Posterior vena cava (tissue), 2 donors: ENCODE measurements at regions of chr3 and their contacts with region 1.

Region 1: DNA sequence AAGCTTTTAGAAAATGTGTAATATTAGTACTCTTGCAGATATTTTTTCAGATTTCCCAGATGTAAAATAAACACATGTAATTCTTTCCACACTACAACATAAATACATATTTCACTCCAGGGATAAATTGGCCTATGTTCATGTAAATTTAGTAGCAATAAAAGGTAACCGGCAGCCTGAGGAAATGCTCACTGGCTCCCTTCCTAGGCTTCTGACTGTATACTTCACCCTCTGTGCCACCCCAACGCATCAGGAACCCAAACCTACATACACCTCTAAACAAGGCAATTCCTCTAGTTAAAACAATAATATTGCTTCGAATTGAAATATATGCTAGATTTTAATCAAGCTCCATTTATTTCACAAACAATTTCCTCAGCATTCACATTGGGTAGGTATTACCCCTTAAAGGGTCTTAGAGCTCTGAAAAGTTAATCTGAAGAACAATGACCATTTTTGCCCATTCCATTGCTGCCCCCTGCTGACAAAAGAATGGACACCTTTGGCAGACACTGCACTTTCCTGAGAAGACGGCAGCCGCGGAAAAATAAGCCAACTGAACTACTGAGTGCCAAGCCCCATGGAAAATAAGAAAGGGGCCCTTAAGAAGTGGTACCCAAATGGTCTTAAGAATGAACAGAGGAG is 212.5 kb downstream of the OSBPL10 start:
- DNase-seq: no peak

Region 2: DNA sequence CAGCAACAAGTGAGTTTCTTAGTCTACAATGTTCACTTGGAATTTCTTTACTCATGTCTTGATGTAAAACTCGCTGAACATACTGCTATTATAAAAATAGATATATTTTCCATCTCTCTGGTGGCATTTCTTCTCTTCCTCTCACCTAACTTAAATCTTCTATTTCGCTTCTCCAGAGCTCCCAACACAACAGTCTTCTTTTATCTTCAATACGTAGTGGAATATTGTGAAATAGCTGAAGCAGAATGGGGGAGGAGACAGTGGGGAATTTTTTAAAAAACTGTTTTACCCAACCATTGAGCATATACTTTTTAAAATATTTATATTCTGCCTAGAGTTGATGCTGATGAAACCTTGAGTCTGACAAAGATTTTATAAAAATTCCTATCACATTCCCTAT is 1939.3 kb before region 1 on chr3:
- intact Hi-C with region 1: no loop called
- DNase-seq: no peak

Region 3: DNA sequence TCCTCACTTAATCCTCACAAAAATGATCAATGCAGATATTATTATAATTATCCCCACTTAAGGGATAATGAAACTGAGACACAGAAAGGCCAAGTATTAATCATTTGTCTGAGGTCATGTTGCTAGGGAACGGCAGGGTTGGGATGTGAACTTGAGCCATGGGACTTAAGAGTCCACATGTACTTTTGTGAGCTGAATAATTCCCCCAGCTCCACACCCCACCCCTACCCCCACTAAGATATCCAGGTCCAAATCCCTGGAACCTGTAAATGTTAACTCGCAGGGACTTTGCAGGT is 583.6 kb before region 1 on chr3:
- intact Hi-C with region 1: loop called in 1 of 2 experiments (anchors 10 kb)
- DNase-seq: no peak

Region 4: DNA sequence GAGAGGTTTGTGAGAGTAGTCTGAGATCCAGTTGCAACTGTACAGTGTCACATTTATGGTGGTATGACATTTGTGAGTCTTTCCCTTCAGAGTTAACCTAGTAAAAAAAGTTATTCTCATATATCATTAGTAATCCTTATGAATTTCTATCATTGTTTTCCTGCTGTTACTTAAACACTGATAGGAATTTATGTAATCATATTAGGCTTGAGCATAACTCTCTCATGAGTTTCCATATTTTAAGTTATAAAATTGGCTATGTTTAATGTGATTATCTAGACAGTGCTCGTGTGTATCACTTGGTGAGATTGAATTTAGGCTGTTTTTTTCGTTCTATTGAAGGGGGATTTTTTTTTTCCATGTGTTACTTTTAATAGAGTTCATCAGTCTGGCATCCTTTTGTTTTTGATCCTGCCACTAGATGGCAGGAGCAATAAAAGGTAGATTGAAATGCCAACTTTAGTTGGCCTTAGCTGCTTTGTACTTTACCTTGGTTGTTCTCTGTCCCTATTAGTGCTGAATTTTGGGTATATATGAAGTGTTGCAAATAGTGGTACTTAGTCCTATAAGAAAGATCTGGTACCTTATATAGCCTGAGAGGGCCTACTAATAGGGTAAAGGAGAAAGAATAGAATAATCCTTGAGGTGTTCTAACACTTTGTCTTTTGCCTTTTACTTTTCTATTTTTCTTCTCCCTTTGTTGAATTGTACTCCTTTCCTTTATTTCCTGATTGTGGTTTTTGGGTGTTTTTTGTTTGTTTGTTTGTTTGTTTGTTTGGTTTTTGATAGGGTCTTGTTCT is 217.9 kb before region 1 on chr3:
- intact Hi-C with region 1: no loop called
- DNase-seq: no peak

Region 5: DNA sequence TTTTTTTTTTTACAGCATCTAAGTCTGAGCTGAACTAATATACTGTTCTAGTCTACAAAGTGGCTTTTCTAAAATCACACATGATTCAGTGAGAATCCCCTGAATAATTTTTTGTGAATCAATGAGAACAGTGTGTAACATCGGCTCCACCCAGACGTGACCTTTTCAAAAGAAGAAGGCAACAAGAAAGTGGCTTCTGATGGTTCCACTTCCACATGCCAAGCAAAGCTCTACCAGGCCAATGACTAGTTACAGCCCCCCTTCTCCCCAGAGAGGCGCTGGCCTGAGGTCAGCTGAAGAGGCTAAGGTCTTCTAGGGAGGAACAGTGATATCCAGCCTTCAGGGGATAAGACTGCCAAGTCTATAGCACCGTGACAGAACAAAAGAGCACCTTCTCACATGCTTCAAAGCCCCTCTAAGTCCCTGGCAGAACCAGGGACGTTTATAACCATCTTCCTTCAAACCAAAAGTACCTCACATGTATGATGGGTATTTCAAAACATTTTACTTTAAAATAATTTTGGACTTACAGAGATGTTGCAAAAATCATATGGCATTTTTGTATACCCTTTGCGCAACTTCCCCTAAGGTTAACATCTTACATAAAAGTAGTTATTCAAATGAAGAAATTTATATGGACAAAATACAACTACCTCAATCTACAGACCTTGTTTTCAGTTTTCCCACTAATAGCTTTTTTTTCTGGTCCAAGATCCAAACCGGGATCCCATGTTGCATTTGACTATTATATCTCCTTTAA is 34.6 kb after region 1 on chr3:
- intact Hi-C with region 1: no loop called
- DNase-seq: no peak

Region 6: DNA sequence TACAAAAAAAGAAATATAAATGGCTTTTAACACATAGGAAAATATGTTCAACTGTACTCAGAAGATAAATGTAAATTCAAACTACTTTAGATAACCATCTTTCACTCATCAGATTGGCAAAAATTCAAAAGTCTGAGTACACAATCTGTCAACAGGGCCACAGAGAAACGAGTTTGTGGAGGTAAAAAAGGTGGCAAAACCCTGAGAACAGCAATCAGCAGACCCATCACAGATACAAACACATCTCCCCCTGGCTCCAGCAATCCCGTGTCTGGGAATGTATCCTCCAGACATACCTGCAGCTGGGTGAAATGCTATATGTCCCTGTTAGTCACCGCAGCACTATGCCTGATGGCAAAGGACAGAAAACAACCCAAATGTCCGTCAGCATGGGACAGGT is 63.0 kb after region 1 on chr3:
- intact Hi-C with region 1: no loop called
- DNase-seq: no peak